ENCODE measurements at regions of chr3 and their contacts with region 1.

Region 1: GRCh38 chr3:184229394-184230080 is at the start of gene VWA5B2:
- DNase-seq: peak in 1 of 2 experiments; percentile 86
- H3K4me3 ChIP-seq: peak within 1 kb of the TSS; percentile 33 to 59 (median 45)
- H3K27ac ChIP-seq: no peak within 1 kb of the TSS
- H3K4me1 ChIP-seq: peaks cover 0 to 20% (median 4%) of the 10 kb centered on the region in 4 experiments; a peak in 5 of 7 replicates
- H3K27me3 ChIP-seq: peaks cover 35 to 60% (median 53%) of the 10 kb centered on the region in 4 experiments
- CTCF ChIP-seq: peak in 2 of 3 experiments; percentile 14 to 15; a peak in 1 of 4 replicates
- EP300 ChIP-seq: no peak
- POLR2A ChIP-seq: no peak
- RAD21 ChIP-seq: no peak; a peak in 1 of 4 replicates
- total RNA-seq, gene VWA5B2: 0.50 and 0.56 TPM in 2 replicates

Region 2: DNA sequence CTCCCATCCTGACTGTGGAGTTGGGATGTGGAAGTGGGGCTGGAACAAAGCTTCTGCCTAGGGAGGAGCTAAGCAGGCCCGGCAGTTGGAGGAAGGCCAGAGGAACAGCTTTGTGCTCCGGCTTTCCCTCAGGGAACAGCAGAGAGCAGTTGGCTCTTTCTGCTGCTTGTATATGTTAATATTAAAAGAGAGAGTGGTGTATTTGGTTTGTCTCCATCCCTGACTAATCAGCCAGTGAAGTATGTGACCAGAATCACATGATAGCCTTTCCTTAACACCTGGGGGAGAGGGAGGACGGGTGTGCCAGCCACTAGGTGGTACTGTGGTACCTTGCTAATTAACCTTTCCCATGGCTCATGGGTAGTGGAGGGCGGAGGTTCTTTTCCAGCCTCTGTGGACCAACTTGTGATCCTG is 84.4 kb before region 1 on chr3:
- CTCF ChIA-PET with region 1: interaction called, 26 read pairs
- POLR2A ChIA-PET with region 1: no interaction called
- DNase-seq: peak in 1 of 2 experiments; percentile 62
- H3K4me3 ChIP-seq: no peak overlapping the region
- H3K27ac ChIP-seq: no peak overlapping the region
- H3K4me1 ChIP-seq: no peaks in the 10 kb centered on the region
- H3K27me3 ChIP-seq: no peaks in the 10 kb centered on the region
- CTCF ChIP-seq: peak; percentile 72 to 82 (median 73)
- EP300 ChIP-seq: no peak
- POLR2A ChIP-seq: no peak
- RAD21 ChIP-seq: peak; percentile 79 to 83

Region 3: DNA sequence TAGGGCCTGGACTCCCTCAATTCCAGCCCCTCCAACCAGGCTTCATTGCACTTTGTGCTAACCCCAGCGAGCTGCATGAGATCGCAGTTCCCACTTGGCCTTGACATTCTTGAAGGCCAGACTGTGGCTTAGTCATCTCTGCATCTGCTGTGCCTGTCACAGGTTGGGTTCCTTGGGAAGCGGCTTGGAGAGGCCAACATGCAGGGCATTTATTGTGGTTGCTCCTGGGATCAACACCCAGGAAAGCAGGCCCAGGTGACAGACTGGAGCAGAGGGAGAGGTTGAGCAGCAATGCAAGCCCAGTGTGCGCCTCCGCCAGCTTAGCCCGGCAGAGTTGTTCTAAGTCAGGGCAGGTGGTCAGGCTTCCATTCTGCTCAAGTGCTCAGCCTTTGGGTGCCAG is 33.0 kb before region 1 on chr3:
- CTCF ChIA-PET with region 1: interaction called, 28 read pairs
- POLR2A ChIA-PET with region 1: interaction called, 3 read pairs
- DNase-seq: no peak
- H3K4me3 ChIP-seq: no peak overlapping the region
- H3K27ac ChIP-seq: no peak overlapping the region
- H3K4me1 ChIP-seq: no peaks in the 10 kb centered on the region
- H3K27me3 ChIP-seq: no peaks in the 10 kb centered on the region
- CTCF ChIP-seq: no peak
- EP300 ChIP-seq: no peak
- POLR2A ChIP-seq: no peak
- RAD21 ChIP-seq: no peak

Region 4: GRCh38 chr3:184218814-184219213 is 10.7 kb before region 1 on chr3:
- CTCF ChIA-PET with region 1: interaction called, 79 read pairs
- POLR2A ChIA-PET with region 1: no interaction called
- DNase-seq: no peak
- H3K4me3 ChIP-seq: no peak overlapping the region
- H3K27ac ChIP-seq: no peak overlapping the region
- H3K4me1 ChIP-seq: no peaks in the 10 kb centered on the region
- H3K27me3 ChIP-seq: no peaks in the 10 kb centered on the region
- CTCF ChIP-seq: no peak
- EP300 ChIP-seq: no peak
- POLR2A ChIP-seq: no peak
- RAD21 ChIP-seq: no peak

Region 5: DNA sequence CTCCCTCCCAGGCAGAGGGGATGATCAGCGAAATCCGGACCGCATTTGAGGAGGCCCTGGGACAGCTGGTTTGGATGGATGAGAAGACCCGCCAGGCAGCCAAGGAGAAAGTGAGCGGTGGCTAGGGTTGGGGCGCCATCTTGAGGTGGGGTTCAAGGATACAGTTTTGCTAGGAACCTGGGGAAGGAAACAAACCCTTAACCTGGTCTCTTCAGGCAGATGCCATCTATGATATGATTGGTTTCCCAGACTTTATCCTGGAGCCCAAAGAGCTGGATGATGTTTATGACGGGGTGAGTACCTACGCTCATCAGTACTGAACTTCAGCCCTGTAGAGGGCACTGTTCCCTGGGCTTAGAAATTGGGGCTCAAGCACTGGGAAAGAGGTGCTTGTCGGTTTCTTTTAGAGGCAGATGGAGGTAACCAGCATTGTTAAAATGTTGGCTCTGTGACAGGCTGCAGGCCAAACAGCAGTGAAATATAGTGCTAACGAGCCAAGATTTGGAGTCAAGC is 59.9 kb after region 1 on chr3:
- CTCF ChIA-PET with region 1: interaction called, 52 read pairs
- POLR2A ChIA-PET with region 1: no interaction called
- DNase-seq: peak; percentile 57 to 91
- H3K4me3 ChIP-seq: no peak overlapping the region
- H3K27ac ChIP-seq: no peak overlapping the region
- H3K4me1 ChIP-seq: peaks cover 0 to 2% (median 0%) of the 10 kb centered on the region in 4 experiments; a peak in 2 of 7 replicates
- H3K27me3 ChIP-seq: no peaks in the 10 kb centered on the region
- CTCF ChIP-seq: peak; percentile 63 to 82 (median 78)
- EP300 ChIP-seq: no peak
- POLR2A ChIP-seq: no peak
- RAD21 ChIP-seq: peak; percentile 94 to 96

Region 6: DNA sequence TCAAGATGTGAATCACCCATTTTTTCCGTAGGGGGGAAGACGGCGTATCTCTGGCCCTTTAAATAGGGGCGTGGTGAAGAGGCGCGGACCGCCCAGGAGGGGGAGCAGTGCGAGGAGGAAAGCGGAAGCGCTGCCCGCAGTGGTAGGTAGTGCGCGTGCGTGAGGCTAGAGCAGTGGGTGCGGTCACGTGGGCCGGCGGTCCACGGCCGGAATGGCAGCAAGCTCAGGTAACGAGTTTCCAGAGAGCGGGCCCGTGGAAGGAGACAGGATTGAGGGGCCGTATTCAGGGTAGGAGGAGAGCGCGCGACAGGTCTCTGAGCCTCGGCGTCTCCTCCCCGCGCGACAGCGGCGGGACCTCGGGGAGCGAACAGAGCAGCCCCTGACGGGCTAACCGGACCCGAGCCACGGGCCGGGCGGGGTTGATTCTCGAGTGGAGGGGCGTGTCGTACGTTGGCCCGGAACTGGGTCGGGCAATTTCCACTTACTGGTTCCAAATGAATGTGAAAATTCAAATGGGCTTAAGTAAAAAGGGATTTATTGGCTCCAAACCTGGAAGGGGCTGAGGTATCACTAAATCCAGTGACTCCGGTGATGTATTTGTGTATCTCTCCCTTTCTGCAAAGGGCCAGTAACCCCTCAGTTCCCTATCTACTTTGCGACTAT is 582.6 kb after region 1 on chr3 and contains the start of gene VPS8:
- CTCF ChIA-PET with region 1: no interaction called
- POLR2A ChIA-PET with region 1: no interaction called
- DNase-seq: peak; percentile 76 to 94
- H3K4me3 ChIP-seq: peak within 1 kb of the TSS; percentile 66 to 99 (median 94)
- H3K27ac ChIP-seq: no peak within 1 kb of the TSS
- H3K4me1 ChIP-seq: peaks cover 0 to 5% (median 2%) of the 10 kb centered on the region in 4 experiments; a peak in 3 of 7 replicates
- H3K27me3 ChIP-seq: no peaks in the 10 kb centered on the region; a peak in 1 of 7 replicates
- CTCF ChIP-seq: peak; percentile 53 to 74 (median 73)
- EP300 ChIP-seq: no peak
- POLR2A ChIP-seq: peak in 1 of 2 experiments; percentile 35; a peak in 1 of 3 replicates
- RAD21 ChIP-seq: peak in 1 of 2 experiments; percentile 13; a peak in 1 of 4 replicates
- total RNA-seq, gene VPS8: 38.0 and 41.0 TPM in 2 replicates

Measured in H1 (cell line).